Activated naive CD4-positive, alpha-beta T cell treated with anti-CD3 and anti-CD28 coated beads for 36 hours (primary cell): ENCODE measurements at regions of chr20 and their contacts with region 1.

Region 1: DNA sequence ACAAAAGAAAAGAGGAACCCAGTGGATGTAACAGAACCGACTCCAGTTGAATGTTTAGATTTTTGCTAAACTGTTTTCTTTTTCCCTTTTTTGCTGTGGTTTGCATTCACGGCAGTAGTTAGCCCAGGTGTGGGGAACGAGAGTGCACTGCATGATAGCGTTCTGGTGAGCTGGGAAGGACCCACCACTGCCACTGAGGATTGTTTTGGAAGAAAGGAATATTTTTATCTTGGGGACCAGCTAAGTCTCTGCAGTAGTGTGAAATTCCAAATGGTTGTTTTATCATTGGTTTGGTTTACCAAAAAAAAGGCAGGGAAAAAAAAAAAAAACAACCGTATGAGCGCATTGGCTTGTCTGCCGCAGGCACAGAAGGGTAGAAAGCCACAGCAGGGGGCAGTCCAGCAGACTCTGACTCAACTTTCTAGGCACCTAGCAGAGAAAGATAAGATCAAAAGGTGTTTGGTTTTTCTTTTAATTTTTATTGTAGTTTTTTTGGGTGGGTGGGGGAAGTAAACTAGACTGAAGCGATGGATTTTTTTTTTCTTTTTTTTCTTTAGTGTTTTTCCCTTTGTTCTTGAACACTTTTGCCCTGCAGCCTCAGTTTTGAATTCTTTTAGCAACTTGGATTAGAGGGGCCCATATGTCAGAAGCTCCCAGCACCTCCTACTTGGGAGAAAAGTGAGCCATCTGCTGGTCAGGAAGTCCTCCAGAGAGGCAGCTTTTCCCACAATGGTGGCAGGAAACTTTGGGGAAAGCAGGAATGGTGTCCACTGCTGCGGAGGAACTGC is 13.5 kb upstream of the RAB5IF start:
- DNase-seq: peak; percentile 76
- H3K4me3 Mint-ChIP-seq: no peak overlapping the region
- H3K27ac Mint-ChIP-seq: peak overlapping the region; percentile 75
- H3K4me1 Mint-ChIP-seq: peaks cover 56% of the 10 kb centered on the region
- H3K27me3 Mint-ChIP-seq: no peaks in the 10 kb centered on the region

Region 2: DNA sequence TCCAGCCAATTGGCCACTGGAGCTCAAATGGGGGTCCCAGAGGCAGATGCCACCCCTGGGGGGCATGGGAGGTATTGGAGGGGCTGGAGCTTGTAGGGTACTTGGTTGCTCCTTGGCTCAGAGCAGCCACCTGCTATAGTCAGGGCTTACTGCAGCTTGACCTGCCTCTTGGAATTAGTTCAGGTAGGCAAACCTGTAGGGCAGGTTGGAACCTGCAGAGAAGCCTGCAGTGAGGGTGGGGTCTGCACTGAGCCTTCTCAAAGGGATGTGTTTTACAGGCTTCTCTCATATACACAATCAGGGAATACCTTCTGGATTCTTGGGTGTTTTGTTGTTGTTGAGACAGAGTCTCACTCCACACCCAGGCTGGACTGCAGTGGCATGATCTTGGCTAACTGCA is 144.9 kb before region 1 on chr20:
- CTCF ChIA-PET with region 1: no interaction called
- intact Hi-C with region 1: no loop called
- DNase-seq: no peak
- H3K4me3 Mint-ChIP-seq: no peak overlapping the region
- H3K27ac Mint-ChIP-seq: no peak overlapping the region
- H3K4me1 Mint-ChIP-seq: no peaks in the 10 kb centered on the region
- H3K27me3 Mint-ChIP-seq: no peaks in the 10 kb centered on the region

Region 3: GRCh38 chr20:36538026-36538722 is 53.9 kb before region 1 on chr20:
- CTCF ChIA-PET with region 1: no interaction called
- intact Hi-C with region 1: no loop called
- DNase-seq: no peak
- H3K4me3 Mint-ChIP-seq: no peak overlapping the region
- H3K27ac Mint-ChIP-seq: no peak overlapping the region
- H3K4me1 Mint-ChIP-seq: no peaks in the 10 kb centered on the region
- H3K27me3 Mint-ChIP-seq: peaks cover 3% of the 10 kb centered on the region

Region 4: DNA sequence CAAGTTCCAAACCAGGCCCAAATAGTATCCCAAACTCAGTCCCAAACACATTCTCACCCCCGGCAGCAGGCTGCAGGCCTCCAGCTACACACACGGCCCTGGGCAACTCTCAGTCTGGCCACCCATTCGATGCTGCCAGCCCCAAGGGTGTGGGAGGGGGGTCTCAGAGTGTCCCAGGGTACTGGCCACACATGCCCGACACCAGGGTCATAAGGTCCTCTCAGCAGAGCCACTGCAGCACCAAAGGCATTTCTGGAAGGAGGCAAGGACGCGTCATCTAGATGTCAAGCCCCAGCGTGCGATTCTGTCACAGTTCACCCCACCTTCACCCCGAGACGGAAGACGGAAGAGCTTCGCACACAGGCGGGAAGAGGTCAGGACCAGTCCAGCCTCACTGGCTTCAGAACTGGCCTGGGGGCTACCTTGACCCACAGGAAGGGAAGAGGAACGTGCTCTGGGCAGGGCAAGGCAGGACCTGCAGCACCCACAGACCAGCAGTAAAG is 41.2 kb before region 1 on chr20:
- CTCF ChIA-PET with region 1: no interaction called
- intact Hi-C with region 1: loop called (anchors 1 kb)
- DNase-seq: no peak
- H3K4me3 Mint-ChIP-seq: no peak overlapping the region
- H3K27ac Mint-ChIP-seq: no peak overlapping the region
- H3K4me1 Mint-ChIP-seq: no peaks in the 10 kb centered on the region
- H3K27me3 Mint-ChIP-seq: no peaks in the 10 kb centered on the region

Region 5: GRCh38 chr20:36573103-36573794 is 18.8 kb before region 1 on chr20 and contains the start of gene TGIF2:
- CTCF ChIA-PET with region 1: interaction called, 10 read pairs
- intact Hi-C with region 1: loop called (anchors 1 kb)
- DNase-seq: peak; percentile 90
- H3K4me3 Mint-ChIP-seq: peak within 1 kb of the TSS; percentile 91
- H3K27ac Mint-ChIP-seq: peak within 1 kb of the TSS; percentile 93
- H3K4me1 Mint-ChIP-seq: peaks cover 35% of the 10 kb centered on the region
- H3K27me3 Mint-ChIP-seq: no peaks in the 10 kb centered on the region
- total RNA-seq, gene TGIF2: 32.2 to 33.6 TPM